ENCODE measurements at regions of chr12 and their contacts with region 1.

Region 1: GRCh38 chr12:67827820-67828383 is 161.3 kb upstream of the IFNG-AS1 start:
- DNase-seq: peak in 1 of 2 donors; percentile 20
- ATAC-seq: peak; percentile 97 to 98 (median 98)
- H3K4me3 ChIP-seq: peak overlapping the region; percentile 62
- H3K27ac ChIP-seq: peak overlapping the region; percentile 95
- H3K4me1 ChIP-seq: peaks cover 24% of the 10 kb centered on the region
- H3K27me3 ChIP-seq: no peaks in the 10 kb centered on the region
- CTCF ChIP-seq: no peak

Region 2: GRCh38 chr12:67885375-67886169 is 57.7 kb after region 1 on chr12:
- intact Hi-C with region 1: loop called in 1 of 2 experiments (anchors 5 kb)
- DNase-seq: no peak
- ATAC-seq: no peak
- H3K4me3 ChIP-seq: no peak overlapping the region
- H3K27ac ChIP-seq: peak overlapping the region; percentile 26
- H3K4me1 ChIP-seq: peaks cover 48% of the 10 kb centered on the region
- H3K27me3 ChIP-seq: no peaks in the 10 kb centered on the region
- CTCF ChIP-seq: no peak

Region 3: DNA sequence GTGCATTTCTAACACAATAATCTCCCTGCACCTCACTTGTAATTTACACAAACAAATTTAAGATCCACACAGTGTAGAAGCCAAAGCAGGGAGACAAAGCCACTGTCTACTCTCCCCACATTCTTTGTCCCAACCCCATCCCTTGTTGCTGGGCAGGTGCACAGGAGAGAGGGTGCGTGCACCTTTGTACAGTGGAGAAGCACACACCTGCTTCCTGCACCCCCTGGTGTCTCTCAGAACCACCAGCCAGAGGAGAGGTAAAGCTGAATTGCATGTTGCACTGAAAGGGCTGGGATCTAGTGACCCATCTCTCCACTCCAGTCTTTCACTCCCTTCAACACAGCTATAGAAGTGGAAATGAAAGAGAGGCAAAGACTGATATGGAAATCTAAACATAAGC is 109.9 kb after region 1 on chr12:
- intact Hi-C with region 1: loop called (anchors 5 to 10 kb)
- DNase-seq: no peak
- ATAC-seq: no peak
- H3K4me3 ChIP-seq: no peak overlapping the region
- H3K27ac ChIP-seq: no peak overlapping the region
- H3K4me1 ChIP-seq: peaks cover 33% of the 10 kb centered on the region
- H3K27me3 ChIP-seq: no peaks in the 10 kb centered on the region
- CTCF ChIP-seq: no peak

Measured in psoas muscle (tissue), 8 donors.